Mammary epithelial cell (primary cell): ENCODE measurements at regions of chr13 and their contacts with region 1.

Region 1: DNA sequence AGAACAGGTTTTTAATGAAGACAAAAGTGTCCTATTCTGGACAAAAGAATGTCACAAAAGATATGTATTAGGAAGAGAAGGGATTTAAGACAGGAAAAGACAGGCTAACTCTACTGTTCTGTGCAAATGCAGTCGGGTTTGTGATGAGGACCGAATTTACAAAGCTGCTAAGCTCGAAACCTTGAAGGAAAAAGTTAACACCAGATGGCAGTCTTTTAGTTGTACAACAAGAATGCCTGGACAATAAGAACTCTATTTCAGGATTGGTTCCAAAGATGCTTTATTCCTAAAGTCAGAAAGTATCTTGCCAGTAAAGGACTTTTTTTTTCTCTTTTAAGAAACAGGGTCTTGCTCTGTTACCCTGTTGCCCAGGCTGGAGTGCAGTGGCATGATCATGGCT is 51.1 kb downstream of the HS6ST3 start:
- DNase-seq: peak; percentile 16
- H3K4me3 ChIP-seq: no peak overlapping the region
- H3K27ac ChIP-seq: no peak overlapping the region
- H3K4me1 ChIP-seq: no peaks in the 10 kb centered on the region
- H3K27me3 ChIP-seq: no peaks in the 10 kb centered on the region
- CTCF ChIP-seq: peak; percentile 22 to 59

Region 2: DNA sequence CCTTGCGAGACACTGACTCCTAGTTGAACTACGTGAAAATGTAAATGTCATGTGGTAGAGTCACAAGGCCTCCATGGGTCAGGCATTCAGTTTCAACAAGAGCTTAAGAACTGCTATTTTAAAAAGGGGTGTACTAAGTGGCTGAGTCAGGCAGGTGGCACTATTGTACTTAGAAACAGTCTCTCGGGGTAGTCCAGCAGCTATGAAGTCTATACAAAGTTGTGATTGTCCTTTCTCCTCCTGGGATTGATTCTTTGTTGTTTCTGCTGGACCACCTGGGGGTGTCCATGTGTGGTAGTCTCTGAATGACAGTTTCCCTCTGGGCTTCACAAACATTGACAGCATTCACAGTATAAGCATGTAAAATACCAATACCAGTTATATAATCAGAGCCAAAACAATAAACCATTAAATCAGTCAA is 120.9 kb before region 1 on chr13:
- CTCF ChIA-PET with region 1: interaction called, 10 read pairs
- dilution Hi-C with region 1: no loop called
- in situ Hi-C with region 1: no loop called
- intact Hi-C with region 1: loop called (anchors 2 kb)
- DNase-seq: peak; percentile 39
- H3K4me3 ChIP-seq: no peak overlapping the region
- H3K27ac ChIP-seq: no peak overlapping the region
- H3K4me1 ChIP-seq: no peaks in the 10 kb centered on the region
- H3K27me3 ChIP-seq: no peaks in the 10 kb centered on the region
- CTCF ChIP-seq: peak; percentile 43 to 69

Region 3: DNA sequence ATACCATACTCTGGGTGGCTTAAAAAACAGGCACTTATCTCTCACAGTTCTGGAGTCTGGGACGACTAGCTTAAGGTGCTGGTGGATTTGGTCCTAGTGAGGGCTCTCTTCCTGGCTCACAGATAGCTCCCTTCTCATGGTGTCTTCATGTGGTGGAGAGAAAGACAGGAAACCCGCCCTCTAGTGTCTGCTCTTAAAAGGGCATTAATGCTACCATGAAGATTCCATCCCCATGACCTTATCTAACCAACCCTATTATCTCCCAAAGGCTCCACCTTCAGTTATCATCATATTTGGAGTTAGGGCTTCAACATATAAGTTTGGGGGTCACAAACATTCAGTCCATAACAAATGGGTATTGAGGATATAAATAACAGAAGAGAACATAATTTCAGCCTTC is 88.3 kb after region 1 on chr13:
- CTCF ChIA-PET with region 1: interaction called, 21 read pairs
- dilution Hi-C with region 1: no loop called
- in situ Hi-C with region 1: no loop called
- intact Hi-C with region 1: loop called (anchors 1 kb)
- DNase-seq: peak; percentile 32
- H3K4me3 ChIP-seq: no peak overlapping the region
- H3K27ac ChIP-seq: no peak overlapping the region
- H3K4me1 ChIP-seq: peaks cover 7% of the 10 kb centered on the region
- H3K27me3 ChIP-seq: no peaks in the 10 kb centered on the region
- CTCF ChIP-seq: peak; percentile 61 to 75

Region 4: GRCh38 chr13:96540671-96541070 is 399.6 kb after region 1 on chr13:
- CTCF ChIA-PET with region 1: interaction called, 13 read pairs
- dilution Hi-C with region 1: no loop called
- in situ Hi-C with region 1: no loop called
- intact Hi-C with region 1: no loop called
- DNase-seq: no peak
- H3K4me3 ChIP-seq: no peak overlapping the region
- H3K27ac ChIP-seq: no peak overlapping the region
- H3K4me1 ChIP-seq: no peaks in the 10 kb centered on the region
- H3K27me3 ChIP-seq: no peaks in the 10 kb centered on the region
- CTCF ChIP-seq: no peak

Region 5: DNA sequence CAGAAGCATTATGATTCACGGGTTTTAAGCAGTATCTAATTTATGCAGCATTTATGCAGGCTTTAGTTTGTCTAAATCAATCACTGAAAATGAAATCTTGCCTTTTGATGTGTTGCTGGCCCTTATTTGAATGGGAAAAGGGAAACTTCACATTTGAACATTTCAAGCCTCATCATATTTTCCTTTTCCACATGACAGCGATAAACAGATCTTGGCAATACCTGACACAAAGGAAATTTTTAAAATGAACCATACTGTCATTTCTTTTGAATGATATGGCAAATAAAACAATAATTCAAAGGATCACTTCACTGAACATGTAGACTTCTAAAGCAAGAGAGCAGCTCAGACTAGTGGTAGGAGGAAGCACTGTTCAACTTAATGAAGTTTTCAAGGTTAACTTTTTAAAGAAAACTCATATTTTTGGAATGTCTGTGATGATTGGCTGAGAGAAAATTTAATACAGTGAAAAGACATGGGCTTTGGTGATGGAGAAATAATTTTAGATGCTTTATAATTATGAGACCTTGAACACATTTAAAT is 655.1 kb after region 1 on chr13:
- CTCF ChIA-PET with region 1: no interaction called
- dilution Hi-C with region 1: no loop called
- in situ Hi-C with region 1: loop called (anchors 25 kb)
- intact Hi-C with region 1: loop called (anchors 5 kb)
- DNase-seq: no peak
- H3K4me3 ChIP-seq: no peak overlapping the region
- H3K27ac ChIP-seq: no peak overlapping the region
- H3K4me1 ChIP-seq: no peaks in the 10 kb centered on the region
- H3K27me3 ChIP-seq: no peaks in the 10 kb centered on the region
- CTCF ChIP-seq: peak; percentile 19 to 56

Region 6: GRCh38 chr13:96817336-96817941 is 676.4 kb after region 1 on chr13:
- CTCF ChIA-PET with region 1: interaction called, 3 read pairs
- dilution Hi-C with region 1: no loop called
- in situ Hi-C with region 1: loop called (anchors 25 kb)
- intact Hi-C with region 1: loop called (anchors 1 kb)
- DNase-seq: peak; percentile 4
- H3K4me3 ChIP-seq: no peak overlapping the region
- H3K27ac ChIP-seq: no peak overlapping the region
- H3K4me1 ChIP-seq: no peaks in the 10 kb centered on the region
- H3K27me3 ChIP-seq: no peaks in the 10 kb centered on the region
- CTCF ChIP-seq: peak; percentile 31 to 62

Region 7: GRCh38 chr13:96822895-96823294 is 681.9 kb after region 1 on chr13:
- CTCF ChIA-PET with region 1: no interaction called
- dilution Hi-C with region 1: no loop called
- in situ Hi-C with region 1: loop called (anchors 25 kb)
- intact Hi-C with region 1: no loop called
- DNase-seq: peak; percentile 21
- H3K4me3 ChIP-seq: no peak overlapping the region
- H3K27ac ChIP-seq: no peak overlapping the region
- H3K4me1 ChIP-seq: no peaks in the 10 kb centered on the region
- H3K27me3 ChIP-seq: no peaks in the 10 kb centered on the region
- CTCF ChIP-seq: peak; percentile 40 to 77